ENCODE measurements at regions of chr3 and their contacts with region 1.

Region 1: GRCh38 chr3:148955544-148956346 is 35.6 kb upstream of the GYG1 start:
- DNase-seq: peak; percentile 54 to 71
- H3K4me3 ChIP-seq: no peak overlapping the region
- H3K4me1 ChIP-seq: 0 out of 2 replicates have a peak, but pooled peaks cover 3% of the 10 kb centered on the region
- H3K27me3 ChIP-seq: 0 out of 2 replicates have a peak, but pooled peaks cover 3% of the 10 kb centered on the region

Region 2: DNA sequence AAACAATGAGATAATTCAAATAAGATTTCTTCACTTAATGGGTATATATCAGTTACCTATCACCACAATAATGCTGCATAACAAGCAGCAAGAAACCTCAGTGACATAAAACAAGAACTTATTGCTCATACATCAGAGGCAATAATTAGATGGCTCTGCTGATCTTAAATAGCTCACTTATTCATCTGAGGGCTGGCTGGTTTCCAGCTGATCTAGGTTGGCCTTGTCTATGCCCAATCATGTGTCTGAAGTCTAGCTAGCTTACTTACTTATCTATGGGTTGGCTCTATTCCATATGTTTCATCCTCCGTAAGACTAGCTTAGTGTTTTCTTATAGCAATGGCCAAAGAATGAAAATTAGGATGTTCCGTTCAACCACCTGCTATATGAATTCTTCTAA is 367.5 kb before region 1 on chr3:
- in situ Hi-C with region 1: no loop called
- DNase-seq: no peak
- H3K4me3 ChIP-seq: no peak overlapping the region
- H3K4me1 ChIP-seq: no peaks in the 10 kb centered on the region
- H3K27me3 ChIP-seq: no peaks in the 10 kb centered on the region

Region 3: DNA sequence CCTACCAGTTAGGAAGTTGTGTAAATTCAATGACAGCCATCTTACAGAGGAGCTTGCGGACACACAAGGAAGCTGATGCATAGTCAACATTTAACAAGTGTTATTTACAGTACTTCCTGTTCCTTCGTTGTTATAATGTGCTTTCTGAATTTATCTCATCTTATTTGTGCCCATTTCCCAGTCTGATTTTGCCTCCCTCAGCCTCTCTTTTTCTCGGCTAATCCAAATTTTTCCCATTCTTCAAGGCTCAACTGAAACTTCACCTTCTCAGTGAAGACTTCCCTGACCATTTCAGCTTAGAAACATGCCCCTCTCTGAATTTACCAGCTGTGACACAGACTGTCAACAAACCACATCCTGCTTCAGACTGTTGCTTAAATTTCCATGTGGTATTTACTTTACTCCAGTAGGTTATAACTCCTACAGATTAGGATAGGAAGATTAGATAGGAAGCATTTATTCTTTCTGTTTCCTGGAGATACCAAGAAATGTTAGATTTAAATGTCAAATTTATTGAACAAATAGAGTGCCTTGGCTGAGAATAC is 321.7 kb after region 1 on chr3:
- in situ Hi-C with region 1: loop called (anchors 5 kb)
- DNase-seq: no peak
- H3K4me3 ChIP-seq: no peak overlapping the region
- H3K4me1 ChIP-seq: no peaks in the 10 kb centered on the region
- H3K27me3 ChIP-seq: no peaks in the 10 kb centered on the region

Region 4: DNA sequence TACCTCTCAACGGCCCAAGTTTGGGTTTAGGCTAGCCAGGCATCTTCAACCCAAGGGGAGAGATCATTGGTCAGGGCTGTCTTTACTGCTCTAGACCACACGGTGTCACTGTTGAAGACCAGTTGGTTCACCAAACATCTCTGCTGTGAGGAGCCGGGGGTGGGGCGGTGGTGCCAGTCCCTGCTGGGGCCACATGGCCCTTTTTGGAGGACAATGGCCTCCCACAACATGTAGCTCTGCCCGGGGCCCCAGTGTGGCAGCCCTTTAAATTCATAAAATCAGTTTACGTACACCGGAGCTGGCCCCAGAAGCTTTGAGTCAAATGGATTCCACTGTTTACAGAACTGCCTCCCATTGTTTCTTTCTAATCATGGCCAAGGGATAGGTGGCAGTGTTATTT is 396.8 kb after region 1 on chr3:
- in situ Hi-C with region 1: no loop called
- DNase-seq: peak; percentile 56 to 84
- H3K4me3 ChIP-seq: no peak overlapping the region
- H3K4me1 ChIP-seq: no peaks in the 10 kb centered on the region; the same call in 1 of the 2 replicates
- H3K27me3 ChIP-seq: no peaks in the 10 kb centered on the region

Measured in HAP-1 (cell line).